Posterior vena cava (tissue), 2 donors: ENCODE measurements at regions of chr7 and their contacts with region 1.

Region 1: GRCh38 chr7:137985253-137985896 is 16.5 kb downstream of the CREB3L2 start:
- DNase-seq: no peak

Region 2: DNA sequence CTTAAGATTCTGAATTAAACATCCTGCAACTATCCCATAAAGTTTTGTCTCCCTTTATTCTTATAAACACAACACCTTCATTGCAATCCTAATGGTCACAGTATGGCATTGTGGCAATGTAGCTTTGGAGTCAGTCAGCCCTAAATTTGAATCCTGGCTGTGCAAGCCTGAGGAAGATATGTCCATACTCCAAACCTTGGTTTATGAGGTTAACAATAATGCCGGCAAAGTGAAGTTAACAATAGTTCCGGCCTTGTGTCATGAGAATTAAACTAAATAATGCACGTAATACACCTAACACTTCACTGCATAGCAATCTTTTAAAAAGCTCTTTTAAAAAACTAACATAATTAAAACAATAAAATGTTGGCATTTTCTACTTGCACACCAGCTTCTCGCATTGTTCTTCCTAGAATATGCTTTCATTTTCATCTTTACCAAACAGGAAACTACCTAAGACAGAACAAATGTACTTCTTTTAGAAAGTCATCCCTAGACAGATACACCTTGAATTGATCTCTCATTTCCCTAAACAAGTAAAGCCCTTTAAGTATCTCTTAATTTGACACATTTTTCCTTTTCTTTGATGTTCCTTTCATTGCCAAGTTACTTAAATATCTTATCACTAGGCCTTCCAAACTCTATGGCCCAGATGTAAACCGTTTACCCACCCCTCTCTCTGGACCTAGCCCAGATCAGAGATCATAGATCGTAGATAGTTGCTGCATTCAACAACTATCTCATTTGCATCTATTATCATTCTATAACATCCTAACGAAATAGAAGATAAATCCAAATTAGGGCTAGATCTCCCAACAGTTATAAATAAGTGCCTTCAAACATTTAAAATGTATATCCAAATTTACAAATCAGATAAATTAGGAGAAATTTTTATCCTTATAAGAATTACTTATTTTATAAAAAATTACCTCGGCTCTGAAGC is 50.2 kb before region 1 on chr7:
- intact Hi-C with region 1: loop called (anchors 5 to 10 kb)
- DNase-seq: no peak

Region 3: DNA sequence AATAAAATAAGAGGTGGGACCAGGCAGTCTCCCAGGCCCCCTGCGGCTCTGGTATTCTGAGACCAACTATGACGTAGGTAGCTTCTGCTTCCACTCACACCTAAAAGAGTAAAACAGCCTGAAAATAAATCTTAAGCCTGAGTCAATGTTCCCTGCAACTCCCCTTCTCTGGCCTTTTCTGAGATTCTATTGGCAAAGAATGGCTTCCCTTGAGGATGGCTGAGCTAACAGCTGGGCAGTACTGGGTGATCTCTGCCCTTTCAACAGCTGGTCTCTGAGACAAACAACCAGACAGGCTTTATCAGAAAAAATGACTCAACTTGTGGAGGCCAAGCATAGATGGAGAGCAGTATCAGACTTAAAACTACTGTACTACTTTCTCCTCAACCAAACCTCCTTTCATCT is 42.2 kb before region 1 on chr7:
- intact Hi-C with region 1: loop called (anchors 5 to 10 kb)
- DNase-seq: peak; percentile 85

Region 4: DNA sequence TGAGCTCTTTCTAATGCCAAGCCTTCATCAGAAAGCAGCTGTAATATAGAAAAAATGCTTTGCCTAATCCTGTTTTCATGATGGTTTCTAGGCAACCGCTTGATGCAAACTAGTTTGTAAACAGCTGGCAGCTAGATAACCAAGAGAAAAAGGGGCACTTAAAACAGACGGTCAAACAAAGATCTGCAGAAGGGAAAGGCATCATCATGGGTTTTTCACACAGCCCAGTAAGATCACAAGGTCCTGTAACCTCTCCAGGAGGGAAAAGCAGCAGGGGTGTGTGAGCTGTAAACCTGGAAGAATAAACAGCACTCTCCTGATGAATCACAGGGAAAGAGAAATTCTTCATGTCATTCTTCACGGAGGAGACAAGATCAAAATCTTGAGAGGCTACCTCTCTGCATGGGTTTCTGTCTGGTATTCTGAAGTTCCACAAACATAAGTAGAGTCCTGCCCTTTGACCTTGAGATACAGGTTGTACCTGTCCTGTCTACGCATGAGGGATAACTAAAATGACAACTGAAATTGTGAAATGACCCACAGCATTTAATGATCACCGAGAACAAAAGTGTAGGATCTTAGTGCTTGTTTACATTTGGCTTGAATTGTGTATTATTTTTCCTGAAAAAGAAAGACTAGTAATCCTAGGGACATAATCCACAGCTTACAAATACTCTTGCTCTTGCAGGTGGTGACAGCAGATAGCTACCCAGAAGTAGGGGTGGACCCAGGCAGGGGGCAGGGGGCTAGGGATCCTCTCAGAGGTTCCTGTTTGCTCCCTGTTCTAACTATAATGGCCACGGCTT is 31.5 kb before region 1 on chr7:
- intact Hi-C with region 1: loop called in 1 of 2 experiments (anchors 5 kb)
- DNase-seq: no peak